ENCODE measurements at regions of chr19 and their contacts with region 1.

Region 1: DNA sequence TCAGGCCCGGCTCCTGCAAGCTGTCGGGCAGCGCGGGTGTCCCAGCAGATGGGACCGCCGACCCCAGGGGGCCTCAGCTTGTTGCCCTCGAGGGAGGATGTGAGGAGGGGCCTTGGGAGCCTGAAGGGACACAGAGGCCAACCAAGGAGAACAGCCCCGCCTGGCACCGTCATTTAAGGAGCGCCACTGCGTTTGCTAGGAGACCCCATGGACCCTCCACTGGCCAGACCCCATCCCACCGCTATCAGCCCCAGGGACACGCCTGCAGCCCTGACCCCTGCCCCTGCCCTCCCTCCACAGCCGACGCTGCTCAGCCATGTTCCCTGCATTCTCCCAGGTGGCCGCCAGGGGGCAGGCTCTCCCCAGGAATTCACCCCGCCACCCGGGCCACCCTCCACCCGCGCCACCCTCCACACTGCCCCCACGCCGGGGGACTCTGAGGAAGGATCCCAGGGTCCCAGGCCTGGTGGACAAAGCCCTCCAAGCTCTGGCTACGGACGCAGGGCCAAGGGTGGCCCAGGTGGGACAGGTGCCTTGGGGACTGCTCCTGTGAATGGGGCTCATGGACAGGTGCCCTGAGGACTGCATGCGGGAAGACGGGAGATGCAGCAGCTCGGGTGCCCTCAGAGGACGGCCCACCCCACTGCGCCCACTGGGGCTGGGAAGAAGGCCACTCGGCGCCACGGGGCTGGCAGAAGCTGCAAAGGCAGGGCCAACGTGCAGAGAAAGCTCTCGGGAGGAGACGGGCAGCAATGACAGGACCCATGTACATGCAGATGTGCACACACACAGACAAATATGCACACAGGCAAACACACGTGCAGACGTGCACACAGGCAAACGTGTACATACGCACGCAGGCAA is 34.4 kb downstream of the PIP5K1C start:
- DNase-seq: peak; percentile 64 to 86 (median 73)
- ATAC-seq: peak; percentile 96
- H3K4me3 ChIP-seq: no peak overlapping the region
- H3K4me3 Mint-ChIP-seq: no peak overlapping the region
- H3K27ac ChIP-seq: no peak overlapping the region
- H3K27ac Mint-ChIP-seq: no peak overlapping the region
- H3K4me1 ChIP-seq: peaks cover 13% of the 10 kb centered on the region
- H3K4me1 Mint-ChIP-seq: peaks cover 3% of the 10 kb centered on the region
- H3K27me3 ChIP-seq: no peaks in the 10 kb centered on the region
- H3K27me3 Mint-ChIP-seq: no peaks in the 10 kb centered on the region
- CTCF ChIP-seq: peak; percentile 88

Region 2: DNA sequence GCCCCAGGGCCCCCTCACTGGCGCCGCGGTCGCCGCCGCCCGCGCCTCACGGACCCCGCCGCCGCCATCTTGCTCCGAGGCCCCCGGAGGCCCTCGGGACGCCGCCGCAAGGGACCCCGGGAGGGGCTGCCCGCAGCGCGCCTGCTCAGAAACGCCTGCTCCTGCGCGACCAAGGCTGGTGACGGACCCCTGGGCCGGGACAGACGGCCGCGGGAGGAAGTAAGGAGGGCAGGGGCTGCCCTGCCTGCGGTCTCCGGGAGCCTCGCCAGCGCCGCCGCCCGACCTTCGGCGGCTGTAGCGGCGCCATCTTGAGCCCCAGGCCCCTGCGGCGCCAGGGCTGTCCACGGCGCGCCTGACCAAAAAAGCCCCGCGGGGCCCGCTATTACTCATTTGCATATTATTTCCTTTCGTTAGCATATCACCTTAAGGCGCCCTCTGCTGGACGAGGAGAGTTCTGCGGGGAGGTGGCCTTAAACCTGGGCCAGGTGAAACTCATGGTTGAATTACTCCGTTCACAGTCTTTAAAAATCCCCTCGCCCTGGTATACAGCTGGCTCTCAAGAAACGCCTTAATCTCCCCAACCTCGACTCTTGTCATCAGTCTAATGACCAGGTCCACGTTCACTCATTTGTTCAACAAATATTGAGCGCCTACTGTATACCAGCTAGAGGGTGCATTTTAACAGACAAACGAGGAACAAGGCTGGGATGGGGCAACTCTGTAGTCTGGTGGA is 1817.3 kb before region 1 on chr19 and contains the start of gene REXO1:
- CTCF ChIA-PET with region 1: no interaction called
- POLR2A ChIA-PET with region 1: no interaction called
- intact Hi-C with region 1: no loop called
- DNase-seq: peak; percentile 96 to 99 (median 98)
- ATAC-seq: peak; percentile 72
- H3K4me3 ChIP-seq: peak within 1 kb of the TSS; percentile 96
- H3K4me3 Mint-ChIP-seq: peak within 1 kb of the TSS; percentile 93
- H3K27ac ChIP-seq: peak within 1 kb of the TSS; percentile 87 to 98
- H3K27ac Mint-ChIP-seq: peak within 1 kb of the TSS; percentile 93
- H3K4me1 ChIP-seq: peaks cover 75% of the 10 kb centered on the region
- H3K4me1 Mint-ChIP-seq: peaks cover 61% of the 10 kb centered on the region
- H3K27me3 ChIP-seq: no peaks in the 10 kb centered on the region
- H3K27me3 Mint-ChIP-seq: no peaks in the 10 kb centered on the region
- CTCF ChIP-seq: peak; percentile 90
- total RNA-seq, gene REXO1: 106 to 114 TPM

Region 3: GRCh38 chr19:3434712-3435553 is 231.0 kb before region 1 on chr19:
- CTCF ChIA-PET with region 1: no interaction called
- POLR2A ChIA-PET with region 1: no interaction called
- intact Hi-C with region 1: no loop called
- DNase-seq: peak; percentile 88 to 97 (median 94)
- ATAC-seq: peak; percentile 94
- H3K4me3 ChIP-seq: peak overlapping the region; percentile 79
- H3K4me3 Mint-ChIP-seq: peak overlapping the region; percentile 97
- H3K27ac ChIP-seq: peak overlapping the region; percentile 92 to 94
- H3K27ac Mint-ChIP-seq: peak overlapping the region; percentile 95
- H3K4me1 ChIP-seq: peaks cover 17% of the 10 kb centered on the region
- H3K4me1 Mint-ChIP-seq: peaks cover 17% of the 10 kb centered on the region
- H3K27me3 ChIP-seq: no peaks in the 10 kb centered on the region
- H3K27me3 Mint-ChIP-seq: no peaks in the 10 kb centered on the region
- CTCF ChIP-seq: no peak

Region 4: DNA sequence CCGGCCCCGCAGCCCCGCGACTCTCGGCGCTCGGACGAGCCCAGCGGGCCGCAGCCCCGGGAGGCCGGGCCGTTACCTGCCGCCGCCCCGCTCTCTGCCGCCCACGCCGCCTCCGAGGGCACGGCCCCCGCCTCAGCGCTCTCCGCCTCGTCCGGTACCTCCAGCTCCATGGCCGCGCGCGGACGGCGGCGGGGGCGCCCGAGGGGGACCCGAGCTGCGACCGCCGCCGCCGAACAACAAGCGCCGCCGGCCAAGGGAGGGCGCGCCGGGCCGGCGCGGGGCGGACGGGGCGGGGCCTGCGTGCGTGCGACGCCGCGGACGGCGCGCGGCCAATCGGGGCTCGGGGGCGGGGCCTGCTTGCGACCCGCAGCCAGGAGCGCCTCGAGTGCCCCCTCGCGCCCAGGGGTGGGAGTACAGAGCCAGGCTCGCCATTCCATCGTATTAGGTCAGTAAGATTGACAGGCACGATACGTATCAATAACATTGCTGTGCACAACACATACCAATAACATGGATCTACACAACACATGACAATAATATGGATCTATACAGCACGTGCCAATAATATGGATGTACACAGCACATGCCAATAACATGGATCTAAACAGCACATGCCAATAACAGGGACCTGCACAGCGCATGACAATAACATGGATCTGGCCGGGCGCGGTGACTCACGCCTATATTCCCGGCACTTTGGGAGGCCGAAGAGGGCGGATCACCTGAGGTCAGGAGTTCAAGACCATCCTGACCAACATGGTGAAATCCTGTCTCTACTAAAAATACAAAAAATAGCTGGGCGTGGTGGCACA is 34.5 kb after region 1 on chr19 and contains the start of gene PIP5K1C:
- CTCF ChIA-PET with region 1: interaction called, 3 read pairs
- POLR2A ChIA-PET with region 1: interaction called, 3 read pairs
- intact Hi-C with region 1: loop called (anchors 1 kb)
- DNase-seq: peak; percentile 84 to 97 (median 92)
- ATAC-seq: peak; percentile 99
- H3K4me3 ChIP-seq: peak within 1 kb of the TSS; percentile 72
- H3K4me3 Mint-ChIP-seq: peak within 1 kb of the TSS; percentile 91
- H3K27ac ChIP-seq: no peak within 1 kb of the TSS
- H3K27ac Mint-ChIP-seq: peak within 1 kb of the TSS; percentile 73
- H3K4me1 ChIP-seq: peaks cover 37% of the 10 kb centered on the region
- H3K4me1 Mint-ChIP-seq: peaks cover 27% of the 10 kb centered on the region
- H3K27me3 ChIP-seq: peaks cover 0 to 2% of the 10 kb centered on the region in 2 experiments
- H3K27me3 Mint-ChIP-seq: no peaks in the 10 kb centered on the region
- CTCF ChIP-seq: peak; percentile 73
- total RNA-seq, gene PIP5K1C: 14.7 to 15.5 TPM

Region 5: DNA sequence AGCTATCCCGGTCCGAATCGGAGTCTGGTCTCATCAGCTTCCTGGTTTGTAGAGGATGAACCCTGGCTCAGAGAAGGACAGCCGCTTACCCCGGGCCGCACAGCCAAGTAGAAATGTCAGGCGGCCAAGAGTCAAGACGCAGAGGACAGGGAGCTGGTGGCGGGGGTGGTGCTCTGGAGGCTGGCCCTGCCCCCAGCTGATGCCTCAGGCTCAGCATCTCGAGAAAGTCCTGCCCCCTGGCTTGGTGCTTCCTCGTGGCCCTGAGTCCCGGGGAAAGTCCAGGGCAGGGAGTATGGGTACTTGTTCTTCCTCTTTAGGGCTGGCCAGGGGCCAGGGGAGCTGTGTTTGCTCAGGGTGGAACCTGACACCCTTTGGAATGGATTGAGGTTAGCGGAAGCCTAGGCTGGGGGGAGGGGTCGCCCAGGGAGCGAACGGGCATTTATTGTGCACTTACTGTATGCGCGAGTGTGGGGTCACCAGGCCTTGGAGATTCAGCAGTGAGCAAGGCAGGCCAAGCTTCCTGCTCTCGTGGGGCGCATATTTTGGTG is 44.4 kb after region 1 on chr19:
- CTCF ChIA-PET with region 1: no interaction called
- POLR2A ChIA-PET with region 1: no interaction called
- intact Hi-C with region 1: loop called (anchors 1 to 2 kb)
- DNase-seq: peak in 2 of 14 experiments; percentile 67 to 77
- ATAC-seq: no peak
- H3K4me3 ChIP-seq: no peak overlapping the region
- H3K4me3 Mint-ChIP-seq: no peak overlapping the region
- H3K27ac ChIP-seq: no peak overlapping the region
- H3K27ac Mint-ChIP-seq: no peak overlapping the region
- H3K4me1 ChIP-seq: peaks cover 8% of the 10 kb centered on the region
- H3K4me1 Mint-ChIP-seq: peaks cover 6% of the 10 kb centered on the region
- H3K27me3 ChIP-seq: peaks cover 0 to 10% of the 10 kb centered on the region in 2 experiments
- H3K27me3 Mint-ChIP-seq: peaks cover 7% of the 10 kb centered on the region
- CTCF ChIP-seq: no peak

Region 6: GRCh38 chr19:3821857-3822364 is 156.0 kb after region 1 on chr19:
- CTCF ChIA-PET with region 1: no interaction called
- POLR2A ChIA-PET with region 1: no interaction called
- intact Hi-C with region 1: loop called (anchors 1 to 5 kb)
- DNase-seq: peak; percentile 70 to 95 (median 89)
- ATAC-seq: peak; percentile 96
- H3K4me3 ChIP-seq: no peak overlapping the region
- H3K4me3 Mint-ChIP-seq: peak overlapping the region; percentile 27
- H3K27ac ChIP-seq: no peak overlapping the region
- H3K27ac Mint-ChIP-seq: no peak overlapping the region
- H3K4me1 ChIP-seq: peaks cover 39% of the 10 kb centered on the region
- H3K4me1 Mint-ChIP-seq: peaks cover 23% of the 10 kb centered on the region
- H3K27me3 ChIP-seq: no peaks in the 10 kb centered on the region
- H3K27me3 Mint-ChIP-seq: no peaks in the 10 kb centered on the region
- CTCF ChIP-seq: peak; percentile 99

Region 7: GRCh38 chr19:3852614-3853254 is 186.8 kb after region 1 on chr19:
- CTCF ChIA-PET with region 1: no interaction called
- POLR2A ChIA-PET with region 1: no interaction called
- intact Hi-C with region 1: loop called in 1 of 2 experiments (anchors 10 kb)
- DNase-seq: peak in 13 of 14 experiments; percentile 8 to 57 (median 27)
- ATAC-seq: no peak
- H3K4me3 ChIP-seq: no peak overlapping the region
- H3K4me3 Mint-ChIP-seq: no peak overlapping the region
- H3K27ac ChIP-seq: no peak overlapping the region
- H3K27ac Mint-ChIP-seq: no peak overlapping the region
- H3K4me1 ChIP-seq: peaks cover 4% of the 10 kb centered on the region
- H3K4me1 Mint-ChIP-seq: no peaks in the 10 kb centered on the region
- H3K27me3 ChIP-seq: no peaks in the 10 kb centered on the region
- H3K27me3 Mint-ChIP-seq: no peaks in the 10 kb centered on the region
- CTCF ChIP-seq: no peak

Region 8: DNA sequence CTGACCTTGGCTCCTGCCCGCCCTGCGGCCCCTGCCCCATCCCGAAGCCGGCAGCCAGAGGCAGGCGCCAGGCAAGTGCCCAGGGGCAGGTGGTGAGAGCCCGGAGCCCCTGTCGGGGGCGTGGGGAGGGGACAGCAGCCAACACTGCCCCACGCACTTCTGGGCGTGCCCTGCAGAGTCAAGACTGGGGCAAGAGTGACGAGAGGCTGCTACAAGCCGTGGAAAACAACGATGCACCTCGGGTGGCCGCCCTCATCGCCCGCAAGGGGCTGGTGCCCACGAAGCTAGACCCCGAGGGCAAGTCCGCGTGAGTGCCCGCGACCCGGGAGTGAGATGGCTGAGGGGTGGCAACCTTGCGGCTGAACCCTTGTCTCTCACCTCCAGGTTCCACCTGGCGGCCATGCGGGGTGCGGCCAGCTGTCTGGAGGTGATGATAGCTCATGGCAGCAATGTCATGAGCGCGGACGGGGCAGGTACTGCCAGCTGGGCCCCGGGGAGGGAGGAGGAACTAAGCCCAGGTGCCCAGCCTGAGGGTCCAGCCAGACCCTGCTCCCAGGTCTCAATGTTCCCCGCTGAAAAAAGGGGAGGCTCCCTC is 533.9 kb after region 1 on chr19:
- CTCF ChIA-PET with region 1: no interaction called
- POLR2A ChIA-PET with region 1: no interaction called
- intact Hi-C with region 1: loop called (anchors 5 to 10 kb)
- DNase-seq: no peak
- ATAC-seq: no peak
- H3K4me3 ChIP-seq: no peak overlapping the region
- H3K4me3 Mint-ChIP-seq: no peak overlapping the region
- H3K27ac ChIP-seq: no peak overlapping the region
- H3K27ac Mint-ChIP-seq: no peak overlapping the region
- H3K4me1 ChIP-seq: peaks cover 8% of the 10 kb centered on the region
- H3K4me1 Mint-ChIP-seq: peaks cover 10% of the 10 kb centered on the region
- H3K27me3 ChIP-seq: peaks cover 31 to 33% of the 10 kb centered on the region in 2 experiments
- H3K27me3 Mint-ChIP-seq: peaks cover 61% of the 10 kb centered on the region
- CTCF ChIP-seq: no peak

Region 9: GRCh38 chr19:4208385-4209094 is 542.6 kb after region 1 on chr19:
- CTCF ChIA-PET with region 1: no interaction called
- POLR2A ChIA-PET with region 1: no interaction called
- intact Hi-C with region 1: loop called (anchors 5 to 10 kb)
- DNase-seq: no peak
- ATAC-seq: no peak
- H3K4me3 ChIP-seq: no peak overlapping the region
- H3K4me3 Mint-ChIP-seq: no peak overlapping the region
- H3K27ac ChIP-seq: no peak overlapping the region
- H3K27ac Mint-ChIP-seq: no peak overlapping the region
- H3K4me1 ChIP-seq: peaks cover 3% of the 10 kb centered on the region
- H3K4me1 Mint-ChIP-seq: no peaks in the 10 kb centered on the region
- H3K27me3 ChIP-seq: peaks cover 0 to 5% of the 10 kb centered on the region in 2 experiments
- H3K27me3 Mint-ChIP-seq: peaks cover 9% of the 10 kb centered on the region
- CTCF ChIP-seq: peak; percentile 19

Measured in CD4-positive, alpha-beta T cell (primary cell).